ENCODE measurements at regions of chr10 and their contacts with region 1.

Region 1: GRCh38 chr10:97714048-97714371 is 480 bp downstream of the MARVELD1 start:
- DNase-seq: peak in 1 of 2 experiments; percentile 76
- H3K4me3 ChIP-seq: peak overlapping the region; percentile 47 to 78 (median 66)
- H3K27ac ChIP-seq: peak overlapping the region; percentile 77
- H3K4me1 ChIP-seq: peaks cover 5 to 18% (median 11%) of the 10 kb centered on the region in 4 experiments
- H3K27me3 ChIP-seq: no peaks in the 10 kb centered on the region
- CTCF ChIP-seq: peak in 2 of 3 experiments; percentile 22 to 41; a peak in 2 of 4 replicates
- EP300 ChIP-seq: no peak
- POLR2A ChIP-seq: peak; percentile 39 to 84
- RAD21 ChIP-seq: no peak

Region 2: GRCh38 chr10:97676770-97677581 is 37.0 kb before region 1 on chr10:
- CTCF ChIA-PET with region 1: interaction called, 111 read pairs
- POLR2A ChIA-PET with region 1: interaction called, 5 read pairs
- DNase-seq: peak in 1 of 2 experiments; percentile 55
- H3K4me3 ChIP-seq: no peak overlapping the region
- H3K27ac ChIP-seq: no peak overlapping the region
- H3K4me1 ChIP-seq: no peaks in the 10 kb centered on the region
- H3K27me3 ChIP-seq: no peaks in the 10 kb centered on the region
- CTCF ChIP-seq: peak; percentile 75 to 85 (median 77)
- EP300 ChIP-seq: no peak
- POLR2A ChIP-seq: peak in 1 of 2 experiments; percentile 47; a peak in 1 of 3 replicates
- RAD21 ChIP-seq: peak; percentile 84 to 85

Region 3: GRCh38 chr10:97686962-97687784 is 26.8 kb before region 1 on chr10 and contains the start of gene AVPI1:
- CTCF ChIA-PET with region 1: interaction called, 50 read pairs
- POLR2A ChIA-PET with region 1: interaction called, 42 read pairs
- DNase-seq: peak; percentile 96 to 98
- H3K4me3 ChIP-seq: peak within 1 kb of the TSS; percentile 60 to 74 (median 72)
- H3K27ac ChIP-seq: peak within 1 kb of the TSS; percentile 62
- H3K4me1 ChIP-seq: peaks cover 0 to 16% (median 5%) of the 10 kb centered on the region in 4 experiments; a peak in 4 of 7 replicates
- H3K27me3 ChIP-seq: peaks cover 0 to 7% (median 0%) of the 10 kb centered on the region in 4 experiments; a peak in 2 of 7 replicates
- CTCF ChIP-seq: no peak
- EP300 ChIP-seq: peak in 1 of 2 experiments; percentile 5; a peak in 1 of 3 replicates
- POLR2A ChIP-seq: peak; percentile 62 to 89
- RAD21 ChIP-seq: no peak
- total RNA-seq, gene AVPI1: 7.8 and 9.0 TPM in 2 replicates

Region 4: GRCh38 chr10:97736902-97737769 is 23.1 kb after region 1 on chr10 and contains the start of gene ZFYVE27:
- CTCF ChIA-PET with region 1: interaction called, 773 read pairs
- POLR2A ChIA-PET with region 1: interaction called, 234 read pairs
- DNase-seq: peak; percentile 97 to 99
- H3K4me3 ChIP-seq: peak within 1 kb of the TSS; percentile 79 to 96 (median 89)
- H3K27ac ChIP-seq: peak within 1 kb of the TSS; percentile 73; the same call in 1 of the 2 replicates
- H3K4me1 ChIP-seq: peaks cover 0 to 6% (median 3%) of the 10 kb centered on the region in 4 experiments; a peak in 5 of 7 replicates
- H3K27me3 ChIP-seq: peaks cover 12 to 21% (median 17%) of the 10 kb centered on the region in 4 experiments
- CTCF ChIP-seq: no peak
- EP300 ChIP-seq: no peak
- POLR2A ChIP-seq: peak in 1 of 2 experiments; percentile 83; a peak in 2 of 3 replicates
- RAD21 ChIP-seq: no peak
- total RNA-seq, gene ZFYVE27: 19.8 and 22.7 TPM in 2 replicates

Region 5: GRCh38 chr10:97743169-97743943 is 29.3 kb after region 1 on chr10:
- CTCF ChIA-PET with region 1: interaction called, 44 read pairs
- POLR2A ChIA-PET with region 1: interaction called, 4 read pairs
- DNase-seq: no peak
- H3K4me3 ChIP-seq: no peak overlapping the region
- H3K27ac ChIP-seq: no peak overlapping the region
- H3K4me1 ChIP-seq: no peaks in the 10 kb centered on the region; a peak in 1 of 7 replicates
- H3K27me3 ChIP-seq: no peaks in the 10 kb centered on the region
- CTCF ChIP-seq: no peak
- EP300 ChIP-seq: no peak
- POLR2A ChIP-seq: no peak
- RAD21 ChIP-seq: no peak

Region 6: DNA sequence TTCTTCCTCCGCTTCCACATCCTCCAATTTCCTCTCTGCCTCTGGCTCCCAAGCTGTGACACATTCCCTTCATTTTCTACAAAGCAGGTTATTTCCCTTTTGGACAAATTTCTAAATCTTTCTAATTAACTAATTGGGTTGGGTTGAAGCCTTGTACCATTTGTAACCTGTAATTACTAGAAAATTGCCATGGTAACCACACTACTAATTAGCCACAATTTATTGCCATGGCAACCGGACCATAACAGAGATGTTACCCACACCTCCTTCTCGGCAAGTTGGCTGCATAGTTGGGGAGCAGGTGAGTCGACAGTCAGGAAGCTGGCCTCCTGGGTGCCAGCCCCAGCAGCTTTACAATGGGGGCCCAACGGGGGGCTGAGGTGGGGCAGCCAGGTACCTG is 197.2 kb after region 1 on chr10:
- CTCF ChIA-PET with region 1: no interaction called
- POLR2A ChIA-PET with region 1: no interaction called
- DNase-seq: no peak
- H3K4me3 ChIP-seq: no peak overlapping the region
- H3K27ac ChIP-seq: no peak overlapping the region
- H3K4me1 ChIP-seq: peaks cover 0 to 6% (median 1%) of the 10 kb centered on the region in 4 experiments; a peak in 2 of 7 replicates
- H3K27me3 ChIP-seq: peaks cover 0 to 4% (median 1%) of the 10 kb centered on the region in 4 experiments; a peak in 4 of 7 replicates
- CTCF ChIP-seq: no peak
- EP300 ChIP-seq: no peak
- POLR2A ChIP-seq: no peak
- RAD21 ChIP-seq: no peak